ENCODE measurements at regions of chr1 and their contacts with region 1.

Region 1: GRCh38 chr1:15323351-15323988 is 76.4 kb downstream of the FHAD1 start:
- DNase-seq: peak; percentile 90
- H3K4me3 ChIP-seq: no peak overlapping the region
- H3K27ac ChIP-seq: peak overlapping the region in 2 of 4 donors; percentile 44 to 52
- H3K4me1 ChIP-seq: peaks cover 0 to 22% (median 17%) of the 10 kb centered on the region in 4 donors
- H3K27me3 ChIP-seq: no peaks in the 10 kb centered on the region
- CTCF ChIP-seq: peak; percentile 93 to 99 (median 98)
- EP300 ChIP-seq: no peak
- POLR2A ChIP-seq: no peak

Region 2: DNA sequence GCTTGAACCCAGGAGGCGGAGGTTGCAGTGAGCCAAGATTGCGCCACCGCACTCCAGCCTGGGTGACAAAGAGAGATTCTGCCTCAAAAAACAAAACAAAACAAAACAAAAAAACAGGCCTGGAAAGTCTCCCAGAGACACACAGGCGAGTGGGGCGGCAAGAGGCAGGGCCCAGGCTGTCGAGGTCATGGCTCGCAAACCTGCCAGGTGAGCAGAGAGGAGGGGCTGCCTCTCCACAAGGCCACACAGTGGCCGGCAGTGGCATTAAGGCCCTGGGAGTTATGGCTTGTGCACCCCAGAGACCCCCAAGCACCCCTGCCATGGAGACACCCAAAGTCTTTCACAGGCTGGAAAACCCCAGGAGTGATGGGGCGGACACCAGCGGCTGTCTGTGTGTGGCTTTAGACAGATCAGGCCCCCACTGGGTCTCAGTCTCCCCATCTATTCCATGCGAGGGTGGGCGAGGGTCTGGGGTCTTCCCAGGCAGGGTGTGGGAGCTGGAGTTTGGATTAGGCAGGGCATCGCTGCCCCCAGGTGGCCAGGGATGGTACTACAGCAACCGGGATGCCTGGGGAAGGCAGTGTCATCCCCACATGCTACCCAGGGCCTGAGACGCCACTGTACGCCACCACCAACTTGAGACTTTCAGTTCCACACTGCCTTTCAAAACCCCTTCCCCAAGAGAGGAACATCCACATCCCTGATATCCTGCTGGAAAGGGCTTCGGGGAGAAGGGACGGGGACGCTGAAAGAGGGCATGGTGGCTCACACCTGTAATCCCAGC is 107.5 kb after region 1 on chr1:
- intact Hi-C with region 1: loop called (anchors 1 kb)
- DNase-seq: no peak
- H3K4me3 ChIP-seq: no peak overlapping the region
- H3K27ac ChIP-seq: no peak overlapping the region
- H3K4me1 ChIP-seq: peaks cover 0 to 46% (median 29%) of the 10 kb centered on the region in 4 donors
- H3K27me3 ChIP-seq: no peaks in the 10 kb centered on the region
- CTCF ChIP-seq: peak; percentile 91 to 98 (median 97)
- EP300 ChIP-seq: no peak
- POLR2A ChIP-seq: no peak

Measured in sigmoid colon (tissue), 7 donors.